ENCODE measurements at regions of chr10 and their contacts with region 1.

Region 1: GRCh38 chr10:31031558-31032257 is at the start of gene ZNF438:
- DNase-seq: peak; percentile 93
- H3K4me3 Mint-ChIP-seq: peak within 1 kb of the TSS; percentile 86
- H3K27ac Mint-ChIP-seq: peak within 1 kb of the TSS; percentile 98
- H3K4me1 Mint-ChIP-seq: peaks cover 16% of the 10 kb centered on the region
- H3K27me3 Mint-ChIP-seq: no peaks in the 10 kb centered on the region
- total RNA-seq, gene ZNF438: 2.4 to 2.6 TPM

Region 2: DNA sequence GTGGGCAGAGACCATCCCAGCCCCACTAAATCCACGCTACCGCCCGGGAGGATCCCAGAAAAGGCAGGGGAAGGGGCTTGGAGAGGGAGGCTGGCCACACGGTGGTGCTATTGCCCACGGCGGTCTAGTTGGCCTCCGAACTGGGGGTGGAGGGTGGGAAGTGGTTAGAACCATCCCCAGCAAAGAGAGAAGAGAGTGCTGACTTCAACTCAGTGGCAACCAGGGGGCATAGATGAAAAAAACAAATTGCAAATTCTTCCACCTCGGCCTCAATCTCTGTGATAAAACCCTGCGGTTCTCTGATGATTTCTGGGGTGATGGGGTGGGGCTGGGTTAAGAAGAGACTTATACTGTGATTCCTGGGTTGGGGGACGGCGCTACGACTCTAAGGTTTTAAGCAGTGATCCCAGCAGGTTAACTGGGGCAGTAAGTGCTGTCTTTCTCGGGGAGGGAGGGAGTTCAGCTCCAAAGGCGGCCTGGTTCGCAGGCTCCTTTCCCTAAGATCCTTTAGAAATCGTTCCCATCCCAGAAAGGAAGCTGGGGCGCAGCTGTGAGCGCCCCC is 247.7 kb before region 1 on chr10:
- CTCF ChIA-PET with region 1: interaction called, 6 read pairs
- intact Hi-C with region 1: loop called (anchors 1 kb)
- DNase-seq: peak; percentile 89
- H3K4me3 Mint-ChIP-seq: peak overlapping the region; percentile 69
- H3K27ac Mint-ChIP-seq: peak overlapping the region; percentile 0
- H3K4me1 Mint-ChIP-seq: peaks cover 17% of the 10 kb centered on the region
- H3K27me3 Mint-ChIP-seq: no peaks in the 10 kb centered on the region

Region 3: GRCh38 chr10:30999070-30999712 is 32.5 kb before region 1 on chr10:
- CTCF ChIA-PET with region 1: interaction called, 3 read pairs
- intact Hi-C with region 1: loop called (anchors 2 kb)
- DNase-seq: peak; percentile 14
- H3K4me3 Mint-ChIP-seq: peak overlapping the region; percentile 22
- H3K27ac Mint-ChIP-seq: no peak overlapping the region
- H3K4me1 Mint-ChIP-seq: peaks cover 25% of the 10 kb centered on the region
- H3K27me3 Mint-ChIP-seq: no peaks in the 10 kb centered on the region

Region 4: GRCh38 chr10:31340343-31340742 is 308.6 kb after region 1 on chr10:
- CTCF ChIA-PET with region 1: no interaction called
- intact Hi-C with region 1: loop called (anchors 5 kb)
- DNase-seq: peak; percentile 49
- H3K4me3 Mint-ChIP-seq: no peak overlapping the region
- H3K27ac Mint-ChIP-seq: no peak overlapping the region
- H3K4me1 Mint-ChIP-seq: peaks cover 31% of the 10 kb centered on the region
- H3K27me3 Mint-ChIP-seq: no peaks in the 10 kb centered on the region

Region 5: DNA sequence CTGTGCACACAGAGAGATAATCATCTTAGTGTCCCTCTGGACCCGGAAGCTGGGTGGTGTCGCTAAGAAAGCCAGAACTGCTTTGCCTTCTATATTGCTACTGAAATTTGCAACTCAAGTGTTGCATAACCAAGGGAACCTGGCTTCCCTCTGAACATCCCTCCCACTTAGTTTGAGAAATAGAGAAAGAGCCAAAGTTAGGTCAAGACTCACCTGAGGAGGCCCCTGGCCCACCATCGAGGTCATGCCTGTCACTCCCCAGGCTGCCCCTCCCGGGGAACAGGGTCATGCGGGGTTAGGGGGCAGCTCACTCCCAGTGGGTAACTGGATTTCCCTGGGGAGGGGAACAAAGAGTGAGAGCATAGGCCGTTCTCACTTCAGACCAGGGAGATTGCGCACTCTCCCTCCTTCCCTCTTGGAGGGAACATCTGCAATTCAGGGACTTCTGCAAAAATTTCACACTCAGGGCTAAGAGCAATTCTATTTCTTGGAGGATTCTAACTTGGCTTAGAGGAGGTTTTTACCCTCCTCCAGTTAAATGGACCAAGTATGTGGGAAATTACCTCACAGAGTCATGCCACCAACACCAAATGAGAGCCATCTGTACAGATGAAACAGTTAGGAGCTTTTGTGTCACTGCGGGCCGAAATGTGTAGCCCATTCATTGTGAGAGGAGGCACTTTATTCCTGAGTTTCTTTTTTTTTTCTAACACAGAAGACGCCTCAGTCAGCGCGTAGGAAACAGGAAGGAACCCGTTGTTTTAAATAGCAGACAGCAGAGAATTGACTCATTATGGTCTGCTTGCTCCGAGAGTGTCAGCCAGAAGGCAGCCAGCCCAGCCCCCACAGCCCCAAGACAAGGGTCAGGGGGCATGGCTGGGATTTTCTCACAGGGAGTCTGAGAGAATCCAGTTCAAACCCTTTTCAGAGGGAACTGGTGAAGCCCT is 675.7 kb after region 1 on chr10:
- CTCF ChIA-PET with region 1: no interaction called
- intact Hi-C with region 1: loop called (anchors 5 kb)
- DNase-seq: peak; percentile 85
- H3K4me3 Mint-ChIP-seq: peak overlapping the region; percentile 5
- H3K27ac Mint-ChIP-seq: peak overlapping the region; percentile 83
- H3K4me1 Mint-ChIP-seq: peaks cover 22% of the 10 kb centered on the region
- H3K27me3 Mint-ChIP-seq: no peaks in the 10 kb centered on the region

Region 6: GRCh38 chr10:31808258-31809218 is 776.8 kb after region 1 on chr10:
- CTCF ChIA-PET with region 1: interaction called, 3 read pairs
- intact Hi-C with region 1: loop called (anchors 2 kb)
- DNase-seq: peak; percentile 24
- H3K4me3 Mint-ChIP-seq: peak overlapping the region; percentile 57
- H3K27ac Mint-ChIP-seq: peak overlapping the region; percentile 77
- H3K4me1 Mint-ChIP-seq: peaks cover 6% of the 10 kb centered on the region
- H3K27me3 Mint-ChIP-seq: no peaks in the 10 kb centered on the region

Measured in activated naive CD4-positive, alpha-beta T cell treated with anti-CD3 and anti-CD28 coated beads for 36 hours (primary cell).